AG04449 (cell line): ENCODE measurements at regions of chr2 and their contacts with region 1.

Region 1: GRCh38 chr2:172084734-172085459 is 410 bp upstream of the DLX1 start:
- DNase-seq: peak; percentile 89
- H3K4me3 ChIP-seq: peak overlapping the region; percentile 68
- CTCF ChIP-seq: no peak

Region 2: GRCh38 chr2:172095146-172095904 is 10.4 kb after region 1 on chr2:
- CTCF ChIA-PET with region 1: interaction called, 4 read pairs
- POLR2A ChIA-PET with region 1: interaction called, 76 read pairs
- DNase-seq: peak; percentile 76
- H3K4me3 ChIP-seq: peak overlapping the region; percentile 66
- CTCF ChIP-seq: no peak

Region 3: GRCh38 chr2:172113617-172114016 is 28.7 kb after region 1 on chr2:
- CTCF ChIA-PET with region 1: no interaction called
- POLR2A ChIA-PET with region 1: no interaction called
- DNase-seq: no peak
- H3K4me3 ChIP-seq: no peak overlapping the region
- CTCF ChIP-seq: peak; percentile 29